CD14-positive monocyte (primary cell): ENCODE measurements at regions of chr13 and their contacts with region 1.

Region 1: DNA sequence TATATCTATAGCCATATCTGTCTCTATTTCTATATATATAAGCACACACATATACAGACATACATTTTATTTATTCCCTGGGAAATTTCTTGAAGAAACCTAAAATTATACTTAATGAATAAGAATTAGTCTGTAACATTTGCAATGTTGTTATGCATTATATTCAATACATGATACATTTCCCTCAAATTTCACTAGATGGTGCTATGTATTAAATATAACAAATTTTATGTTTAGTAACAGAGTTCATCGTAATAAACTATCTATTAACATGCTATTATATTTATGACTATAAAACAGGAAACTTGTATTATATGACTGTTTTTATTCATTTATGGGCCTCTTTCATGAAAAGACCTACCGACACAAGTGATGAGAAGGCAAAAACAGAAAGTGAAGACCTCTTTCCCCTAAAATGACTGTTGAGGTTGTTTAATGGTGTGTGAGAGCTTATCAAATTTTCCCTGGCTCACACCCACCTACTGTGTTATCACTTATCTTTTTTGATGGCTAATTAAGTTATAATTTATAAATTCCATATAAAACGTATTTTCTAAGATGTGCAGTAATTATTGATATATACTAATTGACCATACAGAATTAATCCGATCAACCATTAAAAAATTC is 881.9 kb downstream of the SLITRK6 start:
- DNase-seq: no peak
- H3K4me3 ChIP-seq: no peak overlapping the region
- H3K4me3 Mint-ChIP-seq: no peak overlapping the region
- H3K27ac ChIP-seq: no peak overlapping the region
- H3K27ac Mint-ChIP-seq: no peak overlapping the region
- H3K4me1 ChIP-seq: no peaks in the 10 kb centered on the region
- H3K4me1 Mint-ChIP-seq: no peaks in the 10 kb centered on the region
- H3K27me3 ChIP-seq: no peaks in the 10 kb centered on the region
- H3K27me3 Mint-ChIP-seq: no peaks in the 10 kb centered on the region
- CTCF ChIP-seq: peak; percentile 19

Region 2: GRCh38 chr13:85828149-85828548 is 910.8 kb after region 1 on chr13:
- intact Hi-C with region 1: loop called in 1 of 2 experiments (anchors 10 kb)
- DNase-seq: peak in 1 of 3 donors; percentile 1
- H3K4me3 ChIP-seq: no peak overlapping the region
- H3K4me3 Mint-ChIP-seq: no peak overlapping the region
- H3K27ac ChIP-seq: no peak overlapping the region
- H3K27ac Mint-ChIP-seq: no peak overlapping the region
- H3K4me1 ChIP-seq: no peaks in the 10 kb centered on the region
- H3K4me1 Mint-ChIP-seq: no peaks in the 10 kb centered on the region
- H3K27me3 ChIP-seq: no peaks in the 10 kb centered on the region
- H3K27me3 Mint-ChIP-seq: no peaks in the 10 kb centered on the region
- CTCF ChIP-seq: peak; percentile 80